ENCODE measurements at regions of chr10 and their contacts with region 1.

Region 1: GRCh38 chr10:26839966-26840627 is 20.7 kb downstream of the ABI1 start:
- DNase-seq: no peak
- ATAC-seq: no peak
- H3K4me3 ChIP-seq: no peak overlapping the region
- H3K4me3 Mint-ChIP-seq: peak overlapping the region; percentile 52
- H3K27ac ChIP-seq: peak overlapping the region in 1 of 2 donors; percentile 66
- H3K27ac Mint-ChIP-seq: peak overlapping the region; percentile 62
- H3K4me1 ChIP-seq: peaks cover 34 to 59% of the 10 kb centered on the region in 2 donors
- H3K4me1 Mint-ChIP-seq: peaks cover 72% of the 10 kb centered on the region
- H3K27me3 ChIP-seq: no peaks in the 10 kb centered on the region
- H3K27me3 Mint-ChIP-seq: no peaks in the 10 kb centered on the region
- CTCF ChIP-seq: no peak

Region 2: DNA sequence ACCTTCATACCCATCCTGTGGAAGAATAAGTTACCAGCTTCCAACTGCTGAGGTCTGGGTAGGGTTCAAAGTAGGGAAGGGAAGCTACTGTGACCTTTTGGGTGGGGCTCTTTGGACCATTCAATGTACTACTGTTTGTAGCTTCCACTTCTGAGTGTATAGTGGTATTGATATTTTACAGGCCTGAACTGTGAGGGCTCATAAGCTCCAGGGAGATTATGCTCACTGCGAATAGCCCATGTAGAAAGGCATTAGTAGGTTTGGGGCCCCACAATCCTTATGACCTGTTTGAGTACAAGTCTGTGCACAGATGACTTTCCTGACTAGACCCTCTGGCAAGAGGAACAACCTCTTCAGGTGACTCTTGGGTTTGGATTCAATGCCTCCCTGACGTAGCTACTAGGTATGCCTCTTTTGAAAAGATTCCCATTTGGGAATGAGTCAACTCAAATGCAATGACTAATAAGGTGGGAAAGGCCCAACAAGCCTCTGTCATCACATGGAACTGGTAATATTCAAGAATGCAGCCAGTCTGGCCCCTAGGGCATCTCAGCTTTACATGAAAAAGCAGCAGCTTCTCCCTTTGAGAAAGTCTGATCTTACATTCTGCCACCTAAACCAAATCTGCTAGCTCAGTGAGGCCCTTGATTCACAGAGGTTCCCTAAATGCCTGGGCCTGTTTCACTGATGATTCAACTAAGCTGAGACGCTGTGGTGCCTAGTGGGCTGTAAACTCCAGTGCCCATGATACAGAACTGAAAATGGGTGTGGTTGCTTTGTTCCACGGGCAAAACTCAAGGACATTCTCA is 59.1 kb before region 1 on chr10:
- CTCF ChIA-PET with region 1: no interaction called
- POLR2A ChIA-PET with region 1: no interaction called
- intact Hi-C with region 1: no loop called
- DNase-seq: peak; percentile 73
- ATAC-seq: peak; percentile 95
- H3K4me3 ChIP-seq: peak overlapping the region in 2 of 5 experiments; percentile 12 to 15
- H3K4me3 Mint-ChIP-seq: peak overlapping the region; percentile 71
- H3K27ac ChIP-seq: peak overlapping the region; percentile 69 to 81
- H3K27ac Mint-ChIP-seq: peak overlapping the region; percentile 78
- H3K4me1 ChIP-seq: peaks cover 42 to 56% of the 10 kb centered on the region in 2 donors
- H3K4me1 Mint-ChIP-seq: peaks cover 85% of the 10 kb centered on the region
- H3K27me3 ChIP-seq: no peaks in the 10 kb centered on the region
- H3K27me3 Mint-ChIP-seq: no peaks in the 10 kb centered on the region
- CTCF ChIP-seq: no peak

Region 3: DNA sequence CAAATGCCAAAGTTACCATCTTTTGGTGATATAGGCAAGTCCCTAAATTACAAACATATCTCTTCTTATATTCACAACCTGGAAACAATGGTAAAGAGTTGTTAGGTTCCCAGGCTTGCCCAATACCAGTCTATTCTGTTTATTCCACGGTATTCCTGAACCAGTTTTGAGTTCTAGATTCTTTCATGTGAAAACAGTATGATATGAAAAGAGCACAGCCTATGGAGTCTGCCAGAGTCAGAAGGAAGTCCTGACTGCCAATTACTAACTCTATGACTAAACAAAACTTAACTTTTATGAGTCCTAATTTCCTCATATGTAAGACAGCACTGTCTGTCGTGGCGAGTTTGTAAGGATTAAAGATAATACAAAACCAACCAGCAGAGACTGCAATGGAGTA is 15.1 kb after region 1 on chr10:
- CTCF ChIA-PET with region 1: interaction called, 8 read pairs
- POLR2A ChIA-PET with region 1: no interaction called
- intact Hi-C with region 1: loop called (anchors 2 kb)
- DNase-seq: no peak
- ATAC-seq: no peak
- H3K4me3 ChIP-seq: no peak overlapping the region
- H3K4me3 Mint-ChIP-seq: no peak overlapping the region
- H3K27ac ChIP-seq: peak overlapping the region in 1 of 2 donors; percentile 45
- H3K27ac Mint-ChIP-seq: peak overlapping the region; percentile 20
- H3K4me1 ChIP-seq: peaks cover 42 to 66% of the 10 kb centered on the region in 2 donors
- H3K4me1 Mint-ChIP-seq: peaks cover 64% of the 10 kb centered on the region
- H3K27me3 ChIP-seq: no peaks in the 10 kb centered on the region
- H3K27me3 Mint-ChIP-seq: no peaks in the 10 kb centered on the region
- CTCF ChIP-seq: no peak